ENCODE measurements at regions of chr12 and their contacts with region 1.

Region 1: GRCh38 chr12:93419388-93420034 is 22.2 kb downstream of the UBE2N start:
- DNase-seq: no peak
- H3K4me3 Mint-ChIP-seq: no peak overlapping the region
- H3K27ac Mint-ChIP-seq: no peak overlapping the region
- H3K4me1 Mint-ChIP-seq: peaks cover 88% of the 10 kb centered on the region
- H3K27me3 Mint-ChIP-seq: no peaks in the 10 kb centered on the region

Region 2: GRCh38 chr12:93098077-93098476 is 321.4 kb before region 1 on chr12:
- CTCF ChIA-PET with region 1: interaction called, 24 read pairs
- intact Hi-C with region 1: loop called (anchors 1 kb)
- DNase-seq: peak; percentile 91
- H3K4me3 Mint-ChIP-seq: no peak overlapping the region
- H3K27ac Mint-ChIP-seq: peak overlapping the region; percentile 38
- H3K4me1 Mint-ChIP-seq: peaks cover 10% of the 10 kb centered on the region
- H3K27me3 Mint-ChIP-seq: no peaks in the 10 kb centered on the region

Region 3: GRCh38 chr12:93243689-93244513 is 175.6 kb before region 1 on chr12:
- CTCF ChIA-PET with region 1: interaction called, 6 read pairs
- intact Hi-C with region 1: loop called (anchors 1 kb)
- DNase-seq: peak; percentile 53
- H3K4me3 Mint-ChIP-seq: peak overlapping the region; percentile 49
- H3K27ac Mint-ChIP-seq: peak overlapping the region; percentile 82
- H3K4me1 Mint-ChIP-seq: peaks cover 34% of the 10 kb centered on the region
- H3K27me3 Mint-ChIP-seq: no peaks in the 10 kb centered on the region

Region 4: GRCh38 chr12:93407054-93407962 is 12.2 kb before region 1 on chr12:
- CTCF ChIA-PET with region 1: interaction called, 32 read pairs
- intact Hi-C with region 1: no loop called
- DNase-seq: no peak
- H3K4me3 Mint-ChIP-seq: no peak overlapping the region
- H3K27ac Mint-ChIP-seq: peak overlapping the region; percentile 47
- H3K4me1 Mint-ChIP-seq: peaks cover 48% of the 10 kb centered on the region
- H3K27me3 Mint-ChIP-seq: no peaks in the 10 kb centered on the region

Region 5: GRCh38 chr12:93467351-93468007 is 48.0 kb after region 1 on chr12 and contains the start of gene MRPL42:
- CTCF ChIA-PET with region 1: no interaction called
- intact Hi-C with region 1: loop called (anchors 1 kb)
- DNase-seq: peak; percentile 95
- H3K4me3 Mint-ChIP-seq: peak within 1 kb of the TSS; percentile 95
- H3K27ac Mint-ChIP-seq: peak within 1 kb of the TSS; percentile 91
- H3K4me1 Mint-ChIP-seq: peaks cover 32% of the 10 kb centered on the region
- H3K27me3 Mint-ChIP-seq: no peaks in the 10 kb centered on the region
- total RNA-seq, gene MRPL42: 93.8 to 95.8 TPM